ENCODE measurements at regions of chr3 and their contacts with region 1.

Region 1: DNA sequence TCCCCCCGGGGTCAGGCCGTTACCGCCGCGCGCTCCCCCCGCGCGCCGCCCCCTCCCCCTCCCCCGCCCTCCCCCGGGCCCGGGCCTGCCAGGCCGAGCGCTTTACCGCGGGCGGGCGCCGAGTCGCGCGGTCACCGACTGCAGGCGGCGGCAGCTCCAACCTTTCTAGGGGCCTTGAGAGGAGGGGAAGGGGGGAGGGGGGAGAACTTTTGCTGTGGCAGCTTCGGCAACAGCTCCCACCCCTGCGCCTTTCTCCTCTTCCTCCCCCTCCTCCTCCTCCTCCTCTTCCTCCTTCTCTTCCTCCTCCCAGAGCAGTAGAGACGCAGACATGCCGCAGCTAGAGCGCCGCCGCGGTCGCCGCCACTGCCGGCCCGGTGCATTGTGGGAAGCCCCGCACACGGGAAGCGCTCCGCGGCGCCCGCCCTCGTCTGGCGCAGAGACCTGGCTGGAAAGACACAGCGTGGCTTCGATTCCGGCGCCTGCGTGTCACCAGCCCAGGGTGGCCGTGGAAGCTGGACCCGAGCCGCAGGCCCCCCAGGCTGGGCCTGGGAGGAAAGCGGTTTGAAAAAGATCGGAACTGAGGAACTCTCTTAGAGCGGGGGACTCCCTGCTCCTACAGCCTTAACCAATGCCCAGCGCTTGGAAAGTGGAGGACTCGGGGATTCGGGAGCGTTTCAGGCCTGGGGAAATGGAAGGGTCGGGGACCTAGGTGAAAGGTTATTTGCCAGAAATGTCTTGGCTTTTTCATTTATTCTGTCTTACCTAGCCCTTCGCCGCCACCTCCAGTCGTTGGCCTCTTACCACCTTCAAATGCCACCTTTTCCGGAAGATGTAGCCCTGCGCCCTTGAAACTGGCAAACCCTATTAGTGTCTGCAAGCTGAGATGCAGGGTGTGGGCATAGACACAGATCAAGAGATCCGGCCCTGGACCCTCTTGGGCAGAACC is at the start of gene ZNF148:
- DNase-seq: peak; percentile 76 to 94
- H3K4me3 ChIP-seq: peak within 1 kb of the TSS; percentile 75
- H3K27ac ChIP-seq: peak within 1 kb of the TSS; percentile 64
- H3K4me1 ChIP-seq: peaks cover 19% of the 10 kb centered on the region
- H3K27me3 ChIP-seq: no peaks in the 10 kb centered on the region
- CTCF ChIP-seq: no peak
- total RNA-seq, gene ZNF148: 53.8 and 62.6 TPM in 2 replicates

Region 2: DNA sequence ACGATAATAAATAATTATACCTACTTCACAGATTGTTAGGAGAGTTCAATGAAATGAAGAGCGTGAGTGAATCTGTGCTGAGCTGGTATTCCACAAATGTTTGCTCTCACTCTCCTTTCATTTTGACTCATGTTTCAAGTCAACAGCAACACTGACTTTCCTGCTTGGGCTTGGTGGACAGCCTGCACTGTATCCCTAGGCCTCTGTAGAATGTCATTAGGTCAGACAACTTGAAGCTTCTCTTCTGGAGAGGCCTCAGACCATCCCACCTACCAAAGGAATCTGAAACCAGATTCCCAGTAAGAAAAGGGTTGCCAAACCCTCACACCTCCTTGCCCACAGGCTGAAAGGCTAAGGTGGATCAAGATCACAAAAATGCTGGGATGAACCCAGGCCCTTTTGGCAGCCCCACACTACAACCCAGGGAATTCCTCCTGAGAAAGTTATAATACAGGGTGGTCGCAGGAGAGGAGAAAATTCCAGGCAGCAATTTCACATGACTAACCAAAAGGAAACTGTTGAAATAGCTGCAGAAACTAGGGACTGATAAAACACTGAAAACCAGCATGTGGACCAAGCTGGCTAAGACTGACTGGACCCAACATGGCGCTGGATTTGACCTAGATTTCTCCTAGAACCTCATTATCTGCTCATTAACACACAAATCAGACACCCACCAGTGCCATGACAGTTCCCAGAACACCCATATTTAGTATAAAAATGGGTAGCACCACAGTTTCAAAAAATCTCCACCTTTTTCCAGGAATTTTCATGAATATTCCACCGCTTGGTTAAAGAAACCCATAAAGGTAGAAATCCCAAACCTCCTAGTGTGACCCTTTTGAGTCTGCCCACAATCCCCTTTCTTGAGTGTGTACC is 56.9 kb after region 1 on chr3:
- CTCF ChIA-PET with region 1: interaction called, 11 read pairs
- POLR2A ChIA-PET with region 1: no interaction called
- intact Hi-C with region 1: loop called (anchors 5 kb)
- DNase-seq: no peak
- H3K4me3 ChIP-seq: no peak overlapping the region
- H3K27ac ChIP-seq: no peak overlapping the region
- H3K4me1 ChIP-seq: peaks cover 8% of the 10 kb centered on the region
- H3K27me3 ChIP-seq: no peaks in the 10 kb centered on the region
- CTCF ChIP-seq: no peak